GM10248 (cell line): ENCODE measurements at regions of chr22 and their contacts with region 1.

Region 1: GRCh38 chr22:22884010-22884887 is 3.4 kb upstream of the IGLL5 start:
- DNase-seq: peak; percentile 77
- CTCF ChIP-seq: peak; percentile 85

Region 2: GRCh38 chr22:22605074-22605404 is 279.2 kb before region 1 on chr22:
- CTCF ChIA-PET with region 1: no interaction called
- POLR2A ChIA-PET with region 1: no interaction called
- DNase-seq: peak; percentile 47
- CTCF ChIP-seq: no peak

Region 3: GRCh38 chr22:22710719-22711531 is 173.3 kb before region 1 on chr22:
- CTCF ChIA-PET with region 1: interaction called, 11 read pairs
- POLR2A ChIA-PET with region 1: no interaction called
- DNase-seq: peak; percentile 71
- CTCF ChIP-seq: peak; percentile 90

Region 4: DNA sequence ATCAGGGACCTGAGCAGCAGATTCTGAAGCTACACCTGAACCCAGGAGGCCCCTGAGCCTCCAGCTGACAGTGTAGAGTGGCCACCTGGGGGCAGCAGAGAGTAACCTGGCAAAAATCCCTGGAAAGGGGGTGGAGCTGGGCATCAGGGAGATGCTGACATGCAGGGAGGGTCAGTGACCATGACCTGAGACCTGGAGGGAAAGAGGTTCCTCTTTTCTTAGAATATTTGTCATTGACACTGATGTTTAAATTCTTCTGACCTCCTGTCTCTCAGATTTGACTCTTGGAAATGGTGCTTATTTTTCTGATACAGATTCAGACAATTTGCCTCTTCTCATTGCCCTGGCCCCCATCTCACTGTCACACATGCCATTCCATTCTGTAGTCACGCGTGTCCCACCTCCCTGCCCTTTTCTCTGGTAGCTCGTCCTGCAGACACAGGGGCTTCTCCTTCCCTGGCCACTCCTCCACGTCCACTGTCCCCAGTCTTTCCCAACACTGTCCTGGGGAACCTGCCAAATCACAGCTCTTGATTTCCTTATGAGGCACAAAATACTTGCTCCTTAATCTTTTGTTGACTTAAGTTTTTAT is 113.9 kb before region 1 on chr22:
- CTCF ChIA-PET with region 1: interaction called, 42 read pairs
- POLR2A ChIA-PET with region 1: no interaction called
- DNase-seq: no peak
- CTCF ChIP-seq: peak; percentile 65

Region 5: DNA sequence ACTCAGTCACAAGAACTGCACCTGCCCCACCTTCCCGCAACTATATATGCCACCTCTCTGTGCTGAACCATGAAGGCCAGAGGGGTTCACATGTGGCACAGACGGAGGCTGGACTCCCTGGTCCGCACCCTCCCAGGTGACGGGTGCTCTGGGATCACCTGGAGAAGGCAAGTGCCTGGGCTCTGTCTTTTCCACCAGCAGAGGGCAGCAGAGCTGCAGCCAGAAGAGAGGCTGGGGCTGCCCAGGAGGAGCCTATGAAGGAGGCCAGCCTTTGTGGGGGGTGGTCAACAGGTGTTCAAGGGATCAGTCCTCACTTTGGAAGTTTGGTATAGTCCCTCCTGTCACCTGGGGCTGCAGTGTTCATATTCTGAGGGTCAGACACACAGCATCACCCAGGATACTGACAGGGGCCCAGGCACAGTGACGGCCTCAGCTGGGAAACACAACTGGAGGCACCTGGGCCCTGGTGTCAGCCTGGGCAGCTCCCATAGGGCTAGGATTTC is 35.8 kb before region 1 on chr22:
- CTCF ChIA-PET with region 1: interaction called, 211 read pairs
- POLR2A ChIA-PET with region 1: interaction called, 4 read pairs
- DNase-seq: peak; percentile 59
- CTCF ChIP-seq: peak; percentile 88

Region 6: GRCh38 chr22:22903355-22903777 is 19.1 kb after region 1 on chr22:
- CTCF ChIA-PET with region 1: interaction called, 45 read pairs
- POLR2A ChIA-PET with region 1: no interaction called
- DNase-seq: no peak
- CTCF ChIP-seq: no peak

Region 7: GRCh38 chr22:22948651-22949571 is 64.7 kb after region 1 on chr22:
- CTCF ChIA-PET with region 1: interaction called, 148 read pairs
- POLR2A ChIA-PET with region 1: no interaction called
- DNase-seq: peak; percentile 2
- CTCF ChIP-seq: no peak